Sigmoid colon (tissue), 7 donors: ENCODE measurements at regions of chr13 and their contacts with region 1.

Region 1: GRCh38 chr13:97975848-97976609 is 22.6 kb downstream of the IPO5 start:
- DNase-seq: peak; percentile 94
- H3K4me3 ChIP-seq: peak overlapping the region; percentile 80 to 96 (median 86)
- H3K27ac ChIP-seq: peak overlapping the region; percentile 95 to 98 (median 97)
- H3K4me1 ChIP-seq: peaks cover 0 to 38% (median 30%) of the 10 kb centered on the region in 4 donors
- H3K27me3 ChIP-seq: no peaks in the 10 kb centered on the region
- CTCF ChIP-seq: no peak
- EP300 ChIP-seq: no peak
- POLR2A ChIP-seq: peak in 1 of 2 donors; percentile 28

Region 2: DNA sequence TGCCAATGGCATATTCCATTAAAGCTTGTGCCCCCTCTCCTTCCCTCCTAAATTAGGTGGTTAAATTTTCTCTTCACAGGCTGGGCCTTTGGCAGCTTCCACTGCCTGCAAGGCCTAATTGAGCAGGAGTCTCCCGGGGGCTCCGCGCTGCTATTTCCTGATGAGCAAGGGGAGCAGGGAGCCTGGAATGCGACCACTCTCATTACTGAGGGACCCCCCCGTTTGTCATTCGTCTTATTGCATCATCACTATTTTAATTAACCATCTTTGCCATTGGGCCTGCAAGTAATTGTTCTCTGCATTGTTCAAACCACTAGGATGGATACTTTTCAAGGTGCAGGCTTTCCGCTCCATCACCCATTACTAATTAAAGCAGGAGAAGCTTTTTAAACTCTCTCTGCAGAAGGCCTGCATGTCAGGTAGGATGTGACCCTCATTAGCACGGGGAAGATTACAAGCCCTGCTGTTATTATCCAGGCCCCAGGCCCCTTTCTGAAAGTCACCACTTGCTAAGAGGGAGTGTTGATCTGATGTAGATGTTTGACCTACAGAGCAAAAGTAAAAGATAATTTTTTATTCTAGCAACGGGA is 1124.1 kb before region 1 on chr13:
- intact Hi-C with region 1: no loop called
- DNase-seq: no peak
- H3K4me3 ChIP-seq: no peak overlapping the region
- H3K27ac ChIP-seq: no peak overlapping the region
- H3K4me1 ChIP-seq: no peaks in the 10 kb centered on the region
- H3K27me3 ChIP-seq: no peaks in the 10 kb centered on the region
- CTCF ChIP-seq: no peak
- EP300 ChIP-seq: no peak
- POLR2A ChIP-seq: no peak

Region 3: DNA sequence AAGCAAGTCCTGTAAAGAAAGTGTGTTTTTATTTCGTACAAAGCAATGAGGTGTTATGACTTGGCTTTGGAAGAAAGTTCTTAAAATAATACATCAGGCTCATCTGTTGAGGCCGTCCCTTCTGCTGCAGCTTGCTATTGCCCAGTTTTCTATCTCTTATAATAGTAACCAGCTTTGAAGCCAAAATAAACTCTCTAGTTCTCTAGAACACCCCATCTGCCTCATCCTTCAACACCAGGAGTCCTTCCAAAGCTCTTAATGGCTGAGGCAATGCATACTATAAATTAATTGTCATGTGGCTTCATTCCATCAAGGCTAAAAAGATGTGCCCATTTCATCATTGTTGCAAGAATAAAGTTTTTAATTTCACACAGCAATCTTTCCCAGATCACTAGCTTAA is 72.0 kb before region 1 on chr13:
- intact Hi-C with region 1: loop called (anchors 5 kb)
- DNase-seq: no peak
- H3K4me3 ChIP-seq: no peak overlapping the region
- H3K27ac ChIP-seq: peak overlapping the region in 1 of 4 donors; percentile 51
- H3K4me1 ChIP-seq: peaks cover 0 to 38% (median 21%) of the 10 kb centered on the region in 4 donors
- H3K27me3 ChIP-seq: no peaks in the 10 kb centered on the region
- CTCF ChIP-seq: no peak
- EP300 ChIP-seq: no peak
- POLR2A ChIP-seq: no peak

Region 4: DNA sequence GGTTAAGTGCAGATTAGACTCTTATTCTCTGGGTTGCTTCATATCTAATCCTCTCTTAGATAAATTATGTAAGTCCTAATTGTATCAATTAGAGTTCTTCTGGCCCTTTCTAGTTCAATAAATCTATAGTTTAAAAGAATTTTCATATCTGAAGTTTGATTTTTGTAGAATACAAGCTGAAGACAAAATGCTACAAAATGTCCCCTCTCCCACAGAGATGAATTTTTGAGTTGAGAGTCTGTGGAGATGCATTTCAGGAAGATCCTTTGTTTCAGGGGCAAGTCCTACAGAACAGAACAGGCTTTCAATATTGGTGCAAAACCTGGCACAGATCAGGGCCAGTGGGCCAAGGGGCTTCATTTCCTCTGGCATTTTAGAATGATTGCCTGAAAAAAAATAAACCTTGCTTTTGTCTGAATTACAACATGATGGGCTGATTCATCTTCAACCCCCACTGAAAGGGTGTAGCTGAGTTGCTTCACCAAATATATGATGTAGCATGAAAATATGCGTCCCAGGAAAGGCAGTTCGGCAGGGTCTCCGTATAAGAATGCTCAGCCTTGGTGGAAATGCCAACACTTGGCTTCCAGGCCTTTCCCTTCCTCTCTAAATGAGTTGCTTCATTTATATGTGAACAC is 29.0 kb before region 1 on chr13:
- intact Hi-C with region 1: no loop called
- DNase-seq: no peak
- H3K4me3 ChIP-seq: no peak overlapping the region
- H3K27ac ChIP-seq: no peak overlapping the region
- H3K4me1 ChIP-seq: no peaks in the 10 kb centered on the region
- H3K27me3 ChIP-seq: no peaks in the 10 kb centered on the region
- CTCF ChIP-seq: no peak
- EP300 ChIP-seq: no peak
- POLR2A ChIP-seq: no peak

Region 5: GRCh38 chr13:98252931-98253470 is 277.0 kb after region 1 on chr13:
- intact Hi-C with region 1: no loop called
- DNase-seq: no peak
- H3K4me3 ChIP-seq: no peak overlapping the region
- H3K27ac ChIP-seq: peak overlapping the region; percentile 44 to 70 (median 56)
- H3K4me1 ChIP-seq: peaks cover 0 to 35% (median 22%) of the 10 kb centered on the region in 4 donors
- H3K27me3 ChIP-seq: no peaks in the 10 kb centered on the region
- CTCF ChIP-seq: no peak
- EP300 ChIP-seq: no peak
- POLR2A ChIP-seq: no peak